B cell (primary cell): ENCODE measurements at regions of chr1 and their contacts with region 1.

Region 1: GRCh38 chr1:28552758-28553663 is at the start of gene TRNAU1AP:
- DNase-seq: peak; percentile 98
- ATAC-seq: peak; percentile 94
- H3K4me3 ChIP-seq: peak within 1 kb of the TSS; percentile 77 to 97 (median 90)
- H3K4me3 Mint-ChIP-seq: peak within 1 kb of the TSS; percentile 100
- H3K27ac ChIP-seq: peak within 1 kb of the TSS; percentile 82 to 86
- H3K27ac Mint-ChIP-seq: peak within 1 kb of the TSS; percentile 99
- H3K4me1 ChIP-seq: peaks cover 5 to 17% of the 10 kb centered on the region in 2 donors
- H3K4me1 Mint-ChIP-seq: peaks cover 18% of the 10 kb centered on the region
- H3K27me3 ChIP-seq: no peaks in the 10 kb centered on the region
- H3K27me3 Mint-ChIP-seq: no peaks in the 10 kb centered on the region
- CTCF ChIP-seq: no peak
- total RNA-seq, gene TRNAU1AP: 45.2 and 48.5 TPM in 2 replicates

Region 2: GRCh38 chr1:28104866-28105467 is 448.0 kb before region 1 on chr1:
- CTCF ChIA-PET with region 1: no interaction called
- POLR2A ChIA-PET with region 1: no interaction called
- intact Hi-C with region 1: no loop called
- DNase-seq: no peak
- ATAC-seq: no peak
- H3K4me3 ChIP-seq: no peak overlapping the region
- H3K4me3 Mint-ChIP-seq: no peak overlapping the region
- H3K27ac ChIP-seq: no peak overlapping the region
- H3K27ac Mint-ChIP-seq: no peak overlapping the region
- H3K4me1 ChIP-seq: no peaks in the 10 kb centered on the region
- H3K4me1 Mint-ChIP-seq: no peaks in the 10 kb centered on the region
- H3K27me3 ChIP-seq: no peaks in the 10 kb centered on the region
- H3K27me3 Mint-ChIP-seq: no peaks in the 10 kb centered on the region
- CTCF ChIP-seq: no peak

Region 3: GRCh38 chr1:28499553-28499952 is 53.5 kb before region 1 on chr1:
- CTCF ChIA-PET with region 1: no interaction called
- POLR2A ChIA-PET with region 1: no interaction called
- intact Hi-C with region 1: no loop called
- DNase-seq: no peak
- ATAC-seq: no peak
- H3K4me3 ChIP-seq: no peak overlapping the region
- H3K4me3 Mint-ChIP-seq: no peak overlapping the region
- H3K27ac ChIP-seq: no peak overlapping the region
- H3K27ac Mint-ChIP-seq: no peak overlapping the region
- H3K4me1 ChIP-seq: no peaks in the 10 kb centered on the region
- H3K4me1 Mint-ChIP-seq: no peaks in the 10 kb centered on the region
- H3K27me3 ChIP-seq: no peaks in the 10 kb centered on the region
- H3K27me3 Mint-ChIP-seq: no peaks in the 10 kb centered on the region
- CTCF ChIP-seq: no peak

Region 4: DNA sequence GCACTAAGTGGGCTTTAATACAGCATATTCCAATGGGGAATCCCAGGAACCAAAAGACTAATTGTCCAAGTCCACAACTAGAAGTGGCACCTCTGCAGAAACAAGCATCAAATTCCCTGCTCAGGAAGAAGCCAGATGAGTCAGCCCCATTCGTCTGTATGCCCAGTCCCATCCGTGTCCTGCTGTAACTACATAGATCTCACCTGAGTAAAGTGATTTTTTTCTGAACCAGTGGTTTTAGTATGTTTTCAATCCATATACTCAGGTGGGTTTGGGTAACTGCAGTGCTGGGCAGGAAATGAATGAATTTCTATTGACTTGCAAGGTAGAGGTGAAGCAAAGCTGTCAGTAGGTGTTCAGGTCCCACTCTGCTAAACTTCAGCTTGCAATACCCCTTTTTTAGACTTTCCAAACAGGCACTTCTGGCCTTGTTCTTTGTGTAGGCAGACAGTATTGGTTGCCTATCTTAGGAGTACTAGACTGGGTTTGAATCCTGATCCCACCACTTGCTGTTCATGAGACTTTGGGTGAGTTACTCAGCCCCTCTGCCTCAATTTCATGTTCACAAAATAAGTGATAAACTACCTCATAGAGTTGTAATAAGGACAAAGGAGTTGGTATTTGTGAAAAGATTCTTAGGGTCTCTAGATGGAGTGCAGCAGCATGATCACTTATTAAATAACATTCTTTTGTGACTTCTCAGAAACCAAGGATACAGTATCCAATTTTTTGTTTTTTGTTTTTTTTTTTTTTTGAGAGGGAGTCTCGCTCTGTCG is 42.2 kb before region 1 on chr1:
- CTCF ChIA-PET with region 1: no interaction called
- POLR2A ChIA-PET with region 1: interaction called, 11 read pairs
- intact Hi-C with region 1: no loop called
- DNase-seq: peak; percentile 31
- ATAC-seq: no peak
- H3K4me3 ChIP-seq: no peak overlapping the region
- H3K4me3 Mint-ChIP-seq: peak overlapping the region; percentile 97
- H3K27ac ChIP-seq: peak overlapping the region in 1 of 2 donors; percentile 65
- H3K27ac Mint-ChIP-seq: peak overlapping the region; percentile 88
- H3K4me1 ChIP-seq: peaks cover 47 to 56% of the 10 kb centered on the region in 2 donors
- H3K4me1 Mint-ChIP-seq: peaks cover 56% of the 10 kb centered on the region
- H3K27me3 ChIP-seq: no peaks in the 10 kb centered on the region
- H3K27me3 Mint-ChIP-seq: no peaks in the 10 kb centered on the region
- CTCF ChIP-seq: no peak

Region 5: GRCh38 chr1:28518000-28518744 is 34.8 kb before region 1 on chr1:
- CTCF ChIA-PET with region 1: interaction called, 3 read pairs
- POLR2A ChIA-PET with region 1: interaction called, 4 read pairs
- intact Hi-C with region 1: loop called (anchors 1 kb)
- DNase-seq: peak; percentile 93
- ATAC-seq: peak; percentile 94
- H3K4me3 ChIP-seq: peak overlapping the region; percentile 53 to 68 (median 55)
- H3K4me3 Mint-ChIP-seq: peak overlapping the region; percentile 89
- H3K27ac ChIP-seq: peak overlapping the region in 1 of 2 donors; percentile 45
- H3K27ac Mint-ChIP-seq: peak overlapping the region; percentile 89
- H3K4me1 ChIP-seq: peaks cover 11 to 18% of the 10 kb centered on the region in 2 donors
- H3K4me1 Mint-ChIP-seq: peaks cover 30% of the 10 kb centered on the region
- H3K27me3 ChIP-seq: no peaks in the 10 kb centered on the region
- H3K27me3 Mint-ChIP-seq: no peaks in the 10 kb centered on the region
- CTCF ChIP-seq: peak; percentile 98

Region 6: DNA sequence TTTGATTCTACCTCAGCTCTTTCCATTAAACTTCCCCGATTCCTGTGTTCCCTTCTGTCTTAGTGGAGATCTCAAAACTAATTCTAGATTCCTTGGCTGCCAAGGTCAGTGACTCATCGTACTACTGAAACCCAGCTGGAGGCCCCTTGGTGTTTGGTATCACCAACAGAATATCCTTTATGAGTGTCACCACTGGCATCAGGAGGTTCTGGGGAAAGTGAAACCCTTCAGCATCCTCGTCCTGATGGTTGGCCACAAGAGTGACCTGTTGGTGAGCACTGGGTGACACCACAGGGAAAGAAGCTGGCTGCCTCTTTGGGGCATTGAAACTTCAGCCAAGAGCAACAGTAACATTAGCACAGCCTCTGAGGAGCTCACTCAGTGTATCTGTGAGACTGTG is 48.7 kb after region 1 on chr1:
- CTCF ChIA-PET with region 1: no interaction called
- POLR2A ChIA-PET with region 1: no interaction called
- intact Hi-C with region 1: no loop called
- DNase-seq: no peak
- ATAC-seq: no peak
- H3K4me3 ChIP-seq: no peak overlapping the region
- H3K4me3 Mint-ChIP-seq: no peak overlapping the region
- H3K27ac ChIP-seq: no peak overlapping the region
- H3K27ac Mint-ChIP-seq: no peak overlapping the region
- H3K4me1 ChIP-seq: no peaks in the 10 kb centered on the region
- H3K4me1 Mint-ChIP-seq: no peaks in the 10 kb centered on the region
- H3K27me3 ChIP-seq: no peaks in the 10 kb centered on the region
- H3K27me3 Mint-ChIP-seq: no peaks in the 10 kb centered on the region
- CTCF ChIP-seq: no peak

Region 7: DNA sequence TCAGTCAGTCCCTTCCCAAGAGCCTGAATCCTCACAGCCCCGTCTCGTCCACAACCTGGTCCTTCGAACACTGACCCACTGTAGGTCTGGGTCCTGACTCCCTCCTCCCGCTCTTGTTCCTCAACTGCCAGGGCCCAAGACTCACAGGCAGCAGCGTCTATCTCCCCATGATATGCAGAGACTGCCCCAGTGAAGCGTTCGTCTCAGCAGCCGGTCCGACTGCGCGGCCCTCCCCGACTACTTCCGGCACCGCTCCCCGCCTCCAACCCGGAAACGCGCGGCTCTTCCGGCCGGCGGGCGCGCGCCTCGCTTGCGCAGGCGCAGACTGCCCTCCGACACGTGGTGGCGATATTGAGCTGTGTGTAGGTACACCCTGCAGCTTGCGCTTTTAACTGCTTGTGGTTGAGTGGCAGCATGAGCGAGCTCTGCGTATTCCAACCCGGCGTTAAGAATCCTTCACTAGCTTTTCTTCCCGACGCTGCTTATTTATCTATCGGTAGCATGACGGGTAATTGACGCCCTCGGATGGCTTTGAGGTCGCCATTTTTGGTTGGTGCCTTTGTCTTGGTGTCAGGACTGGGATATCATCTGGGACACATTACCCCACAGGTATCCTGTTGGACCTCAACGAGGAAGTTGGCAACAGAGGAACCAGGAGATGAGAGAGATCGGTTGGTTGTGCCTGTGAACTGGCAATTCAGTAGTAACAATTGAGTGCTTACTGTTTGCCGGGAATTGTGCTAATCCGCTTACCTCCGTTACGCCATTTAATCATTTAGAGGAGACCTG is 90.0 kb after region 1 on chr1 and contains the start of gene TAF12:
- CTCF ChIA-PET with region 1: no interaction called
- POLR2A ChIA-PET with region 1: interaction called, 3 read pairs
- intact Hi-C with region 1: loop called (anchors 1 kb)
- DNase-seq: peak; percentile 97
- ATAC-seq: peak; percentile 84
- H3K4me3 ChIP-seq: peak within 1 kb of the TSS; percentile 67 to 91 (median 89)
- H3K4me3 Mint-ChIP-seq: peak within 1 kb of the TSS; percentile 100
- H3K27ac ChIP-seq: peak within 1 kb of the TSS; percentile 97 to 100
- H3K27ac Mint-ChIP-seq: peak within 1 kb of the TSS; percentile 99
- H3K4me1 ChIP-seq: peaks cover 29 to 31% of the 10 kb centered on the region in 2 donors
- H3K4me1 Mint-ChIP-seq: peaks cover 49% of the 10 kb centered on the region
- H3K27me3 ChIP-seq: no peaks in the 10 kb centered on the region
- H3K27me3 Mint-ChIP-seq: no peaks in the 10 kb centered on the region
- CTCF ChIP-seq: peak; percentile 54
- total RNA-seq, gene TAF12: 18.5 and 19.1 TPM in 2 replicates

Region 8: GRCh38 chr1:28648474-28649198 is 95.6 kb after region 1 on chr1 and contains the start of gene RNU11:
- CTCF ChIA-PET with region 1: no interaction called
- POLR2A ChIA-PET with region 1: interaction called, 3 read pairs
- intact Hi-C with region 1: loop called (anchors 1 kb)
- DNase-seq: peak; percentile 98
- ATAC-seq: peak; percentile 72
- H3K4me3 ChIP-seq: peak within 1 kb of the TSS; percentile 9 to 60 (median 53)
- H3K4me3 Mint-ChIP-seq: peak within 1 kb of the TSS; percentile 94
- H3K27ac ChIP-seq: peak within 1 kb of the TSS; percentile 93 to 100
- H3K27ac Mint-ChIP-seq: peak within 1 kb of the TSS; percentile 100
- H3K4me1 ChIP-seq: peaks cover 25 to 33% of the 10 kb centered on the region in 2 donors
- H3K4me1 Mint-ChIP-seq: peaks cover 32% of the 10 kb centered on the region
- H3K27me3 ChIP-seq: no peaks in the 10 kb centered on the region
- H3K27me3 Mint-ChIP-seq: no peaks in the 10 kb centered on the region
- CTCF ChIP-seq: no peak
- total RNA-seq, gene RNU11: not detected in 2 replicates

Region 9: GRCh38 chr1:28668191-28668955 is 115.4 kb after region 1 on chr1 and contains the start of gene GMEB1:
- CTCF ChIA-PET with region 1: no interaction called
- POLR2A ChIA-PET with region 1: no interaction called
- intact Hi-C with region 1: loop called (anchors 2 kb)
- DNase-seq: peak; percentile 88
- ATAC-seq: peak; percentile 65
- H3K4me3 ChIP-seq: peak within 1 kb of the TSS; percentile 68 to 95 (median 94)
- H3K4me3 Mint-ChIP-seq: peak within 1 kb of the TSS; percentile 94
- H3K27ac ChIP-seq: peak within 1 kb of the TSS; percentile 95 to 98
- H3K27ac Mint-ChIP-seq: peak within 1 kb of the TSS; percentile 99
- H3K4me1 ChIP-seq: peaks cover 5 to 24% of the 10 kb centered on the region in 2 donors
- H3K4me1 Mint-ChIP-seq: peaks cover 19% of the 10 kb centered on the region
- H3K27me3 ChIP-seq: no peaks in the 10 kb centered on the region
- H3K27me3 Mint-ChIP-seq: no peaks in the 10 kb centered on the region
- CTCF ChIP-seq: no peak
- total RNA-seq, gene GMEB1: 21.7 and 24.8 TPM in 2 replicates